ENCODE measurements at regions of chr2 and their contacts with region 1.

Region 1: DNA sequence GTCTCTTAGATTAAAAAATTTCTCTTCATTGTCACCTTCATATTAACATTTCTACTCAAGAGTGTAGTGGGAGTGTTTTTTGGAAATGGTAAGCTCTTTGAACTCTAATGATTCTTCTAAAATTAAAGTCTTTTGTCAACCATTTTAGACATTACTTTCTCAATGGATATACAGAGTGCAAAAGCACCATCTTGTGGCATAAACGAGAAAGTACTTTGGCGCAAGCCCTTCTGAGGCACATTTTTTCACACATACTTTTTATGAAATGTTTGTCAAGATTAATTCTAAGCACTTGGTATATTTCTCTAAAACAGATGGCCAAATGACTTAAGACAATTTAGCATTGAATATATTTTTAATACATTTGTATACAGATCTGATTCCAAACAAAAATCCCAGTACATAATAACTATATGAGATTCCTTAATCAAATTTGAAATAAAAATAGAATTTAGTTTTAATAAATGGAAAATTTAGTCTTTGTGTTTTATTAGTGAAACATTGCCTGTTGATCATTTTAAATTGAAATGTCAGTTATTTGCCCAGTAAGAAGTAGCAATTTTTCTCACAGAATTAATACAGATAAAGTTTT is 63.3 kb upstream of the GALNT5 start:
- DNase-seq: peak; percentile 10
- H3K4me3 ChIP-seq: no peak overlapping the region
- H3K27ac ChIP-seq: no peak overlapping the region
- H3K4me1 ChIP-seq: no peaks in the 10 kb centered on the region
- H3K27me3 ChIP-seq: no peaks in the 10 kb centered on the region
- CTCF ChIP-seq: peak; percentile 60 to 70 (median 67)
- EP300 ChIP-seq: no peak
- POLR2A ChIP-seq: no peak

Region 2: DNA sequence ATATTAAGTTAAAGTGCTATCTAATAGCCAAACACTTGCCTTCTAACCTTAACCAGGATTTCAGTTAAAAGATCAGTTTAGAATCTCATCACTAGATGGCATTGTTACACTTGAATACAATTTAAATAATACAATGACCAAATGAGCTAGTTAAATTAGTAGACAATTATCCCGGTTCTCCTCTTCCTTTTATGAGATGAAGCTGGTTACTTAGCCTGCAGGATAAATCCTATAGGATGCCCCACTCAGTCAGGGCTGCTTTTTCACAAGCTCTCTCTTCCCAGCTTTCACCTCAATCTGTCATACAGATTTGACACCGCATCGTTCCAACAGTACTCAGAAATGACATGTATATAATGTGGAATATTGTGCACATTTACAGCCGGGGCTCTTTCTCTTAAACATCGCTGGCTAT is 1816.9 kb before region 1 on chr2:
- in situ Hi-C with region 1: loop called in 2 of 4 experiments (anchors 25 kb)
- intact Hi-C with region 1: no loop called
- DNase-seq: no peak
- H3K4me3 ChIP-seq: no peak overlapping the region
- H3K27ac ChIP-seq: no peak overlapping the region
- H3K4me1 ChIP-seq: no peaks in the 10 kb centered on the region
- H3K27me3 ChIP-seq: no peaks in the 10 kb centered on the region
- CTCF ChIP-seq: peak in 4 of 5 experiments; percentile 10 to 29 (median 14)
- EP300 ChIP-seq: no peak
- POLR2A ChIP-seq: no peak

Region 3: DNA sequence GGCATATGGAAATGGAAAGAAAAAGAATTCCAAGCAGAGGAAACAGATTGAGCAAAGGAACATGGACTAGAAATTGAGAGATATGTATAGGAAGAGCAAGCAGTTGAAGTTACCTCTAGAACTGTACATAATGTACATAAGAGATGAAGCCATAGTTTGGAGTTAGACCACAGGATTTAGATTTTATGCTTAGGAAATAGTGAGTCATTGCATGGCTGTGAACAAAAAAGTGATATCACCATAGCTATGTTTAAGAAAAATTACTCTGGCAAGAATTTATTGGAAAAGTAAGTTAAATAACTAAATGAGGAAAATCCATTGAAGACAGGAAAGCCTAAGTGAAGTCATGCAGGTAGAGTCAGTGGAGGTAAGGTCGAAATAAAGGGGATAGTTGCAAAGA is 36.1 kb before region 1 on chr2:
- in situ Hi-C with region 1: no loop called
- intact Hi-C with region 1: no loop called
- DNase-seq: no peak
- H3K4me3 ChIP-seq: no peak overlapping the region
- H3K27ac ChIP-seq: no peak overlapping the region
- H3K4me1 ChIP-seq: peaks cover 0 to 17% (median 10%) of the 10 kb centered on the region in 4 donors
- H3K27me3 ChIP-seq: no peaks in the 10 kb centered on the region
- CTCF ChIP-seq: no peak
- EP300 ChIP-seq: no peak
- POLR2A ChIP-seq: no peak